Adrenal gland (tissue), 19 donors: ENCODE measurements at regions of chr20 and their contacts with region 1.

Region 1: DNA sequence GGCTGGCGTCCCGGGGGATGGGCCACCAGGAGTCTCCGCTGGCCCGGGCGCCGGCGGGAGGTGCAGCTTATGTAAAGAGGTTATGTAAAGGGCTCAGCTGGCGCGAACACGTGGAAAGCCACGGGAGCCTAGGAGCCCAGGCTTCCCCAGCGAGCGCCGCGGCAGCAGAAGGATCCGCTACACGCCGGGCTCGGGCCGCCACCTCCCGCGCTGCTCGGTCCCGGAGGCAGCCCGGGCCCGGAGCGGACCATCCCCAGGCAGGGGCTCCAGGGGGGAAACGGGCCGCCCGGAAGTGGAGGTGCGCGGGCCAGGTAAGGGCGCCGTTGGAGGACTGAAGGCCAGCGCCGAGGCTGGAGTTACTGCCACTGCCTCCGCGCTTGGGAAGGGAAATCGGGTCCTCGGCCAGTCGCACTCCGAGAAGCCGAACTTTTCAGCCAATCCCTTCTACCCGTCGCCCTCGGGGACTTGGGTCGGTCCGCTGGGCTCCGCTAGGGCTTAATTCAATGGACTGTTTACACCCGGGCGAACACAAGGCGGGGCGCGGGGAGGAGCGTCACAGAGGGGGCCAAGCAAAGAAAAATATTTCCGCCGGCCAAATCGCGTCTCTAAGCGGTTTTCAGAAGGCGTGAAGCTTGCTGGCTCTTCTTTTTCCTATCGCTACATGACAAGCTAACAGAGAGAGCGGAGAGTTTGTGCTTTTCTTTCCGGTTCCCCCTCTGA is 398 bp downstream of the STK35 start:
- DNase-seq: peak; percentile 91 to 96 (median 93)
- H3K4me3 ChIP-seq: peak overlapping the region; percentile 70 to 96 (median 80)
- H3K27ac ChIP-seq: peak overlapping the region; percentile 96 to 99 (median 99)
- H3K4me1 ChIP-seq: peaks cover 29 to 47% of the 10 kb centered on the region in 2 donors
- H3K27me3 ChIP-seq: no peaks in the 10 kb centered on the region
- CTCF ChIP-seq: peak in 4 of 6 experiments; percentile 7 to 50 (median 27)
- POLR2A ChIP-seq: peak; percentile 55 to 80

Region 2: GRCh38 chr20:1965520-1966351 is 136.3 kb before region 1 on chr20:
- intact Hi-C with region 1: loop called in 1 of 2 experiments (anchors 10 kb)
- DNase-seq: peak; percentile 65 to 91 (median 77)
- H3K4me3 ChIP-seq: peak overlapping the region in 1 of 4 donors; percentile 9
- H3K27ac ChIP-seq: no peak overlapping the region
- H3K4me1 ChIP-seq: peaks cover 0 to 17% of the 10 kb centered on the region in 2 donors
- H3K27me3 ChIP-seq: no peaks in the 10 kb centered on the region
- CTCF ChIP-seq: peak; percentile 84 to 93 (median 89)
- POLR2A ChIP-seq: no peak